ENCODE measurements at regions of chrX and their contacts with region 1.

Region 1: GRCh38 chrX:100609591-100609990 is 24.9 kb downstream of the TNMD start:
- DNase-seq: no peak
- H3K4me3 ChIP-seq: no peak overlapping the region
- H3K4me3 Mint-ChIP-seq: no peak overlapping the region
- H3K27ac Mint-ChIP-seq: no peak overlapping the region
- H3K4me1 ChIP-seq: no peaks in the 10 kb centered on the region
- H3K4me1 Mint-ChIP-seq: no peaks in the 10 kb centered on the region
- H3K27me3 ChIP-seq: no peaks in the 10 kb centered on the region
- H3K27me3 Mint-ChIP-seq: no peaks in the 10 kb centered on the region
- CTCF ChIP-seq: no peak

Region 2: GRCh38 chrX:100447654-100448397 is 161.8 kb before region 1 on chrX:
- CTCF ChIA-PET with region 1: interaction called, 9 read pairs
- POLR2A ChIA-PET with region 1: no interaction called
- intact Hi-C with region 1: loop called (anchors 1 kb)
- DNase-seq: peak; percentile 45 to 49
- H3K4me3 ChIP-seq: no peak overlapping the region
- H3K4me3 Mint-ChIP-seq: peak overlapping the region; percentile 63
- H3K27ac Mint-ChIP-seq: no peak overlapping the region
- H3K4me1 ChIP-seq: no peaks in the 10 kb centered on the region
- H3K4me1 Mint-ChIP-seq: no peaks in the 10 kb centered on the region
- H3K27me3 ChIP-seq: no peaks in the 10 kb centered on the region
- H3K27me3 Mint-ChIP-seq: peaks cover 2% of the 10 kb centered on the region
- CTCF ChIP-seq: peak; percentile 66 to 73

Region 3: GRCh38 chrX:100512471-100512870 is 97.1 kb before region 1 on chrX:
- CTCF ChIA-PET with region 1: interaction called, 7 read pairs
- POLR2A ChIA-PET with region 1: no interaction called
- intact Hi-C with region 1: loop called (anchors 1 kb)
- DNase-seq: peak in 1 of 2 experiments; percentile 6
- H3K4me3 ChIP-seq: no peak overlapping the region
- H3K4me3 Mint-ChIP-seq: no peak overlapping the region
- H3K27ac Mint-ChIP-seq: no peak overlapping the region
- H3K4me1 ChIP-seq: no peaks in the 10 kb centered on the region
- H3K4me1 Mint-ChIP-seq: no peaks in the 10 kb centered on the region
- H3K27me3 ChIP-seq: no peaks in the 10 kb centered on the region
- H3K27me3 Mint-ChIP-seq: peaks cover 6% of the 10 kb centered on the region
- CTCF ChIP-seq: peak; percentile 41

Region 4: DNA sequence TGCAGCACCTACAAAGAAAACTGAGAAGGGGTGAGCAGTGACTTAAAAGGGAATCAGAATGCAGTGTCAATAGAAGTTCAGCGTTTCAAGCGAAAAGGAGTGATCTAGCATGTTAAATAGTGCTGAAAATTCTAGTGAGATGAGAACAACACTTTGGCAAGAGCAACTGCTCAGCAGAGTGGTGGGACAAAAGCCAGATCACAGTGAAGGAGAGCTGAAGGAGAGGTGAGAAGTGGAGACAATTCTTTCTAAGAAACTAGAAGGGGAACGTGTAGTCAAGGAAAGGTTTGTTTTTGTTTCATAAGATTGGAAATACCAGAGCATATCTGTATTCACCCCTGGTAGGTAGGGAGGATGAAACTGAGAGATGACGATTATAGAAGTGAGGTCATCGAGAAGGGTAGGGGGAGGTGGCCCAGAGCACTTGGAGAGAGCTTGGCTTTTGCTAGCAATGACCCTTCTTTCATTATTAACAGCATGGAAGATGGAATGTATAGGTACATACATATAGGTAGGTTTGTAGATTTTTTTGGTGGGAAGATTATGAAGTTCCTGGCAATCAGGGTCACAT is 68.1 kb after region 1 on chrX:
- CTCF ChIA-PET with region 1: no interaction called
- POLR2A ChIA-PET with region 1: no interaction called
- intact Hi-C with region 1: no loop called
- DNase-seq: no peak
- H3K4me3 ChIP-seq: no peak overlapping the region
- H3K4me3 Mint-ChIP-seq: no peak overlapping the region
- H3K27ac Mint-ChIP-seq: no peak overlapping the region
- H3K4me1 ChIP-seq: no peaks in the 10 kb centered on the region
- H3K4me1 Mint-ChIP-seq: peaks cover 12% of the 10 kb centered on the region
- H3K27me3 ChIP-seq: no peaks in the 10 kb centered on the region
- H3K27me3 Mint-ChIP-seq: no peaks in the 10 kb centered on the region
- CTCF ChIP-seq: no peak

Region 5: GRCh38 chrX:100812216-100813158 is 202.9 kb after region 1 on chrX:
- CTCF ChIA-PET with region 1: no interaction called
- POLR2A ChIA-PET with region 1: no interaction called
- intact Hi-C with region 1: no loop called
- DNase-seq: no peak
- H3K4me3 ChIP-seq: no peak overlapping the region
- H3K4me3 Mint-ChIP-seq: no peak overlapping the region
- H3K27ac Mint-ChIP-seq: no peak overlapping the region
- H3K4me1 ChIP-seq: no peaks in the 10 kb centered on the region
- H3K4me1 Mint-ChIP-seq: no peaks in the 10 kb centered on the region
- H3K27me3 ChIP-seq: no peaks in the 10 kb centered on the region
- H3K27me3 Mint-ChIP-seq: no peaks in the 10 kb centered on the region
- CTCF ChIP-seq: no peak